ENCODE measurements at regions of chr12 and their contacts with region 1.

Region 1: GRCh38 chr12:12562585-12563261 is at the start of gene DUSP16:
- DNase-seq: peak; percentile 96
- H3K4me3 Mint-ChIP-seq: peak within 1 kb of the TSS; percentile 88
- H3K27ac Mint-ChIP-seq: peak within 1 kb of the TSS; percentile 96
- H3K4me1 Mint-ChIP-seq: peaks cover 29% of the 10 kb centered on the region
- H3K27me3 Mint-ChIP-seq: no peaks in the 10 kb centered on the region
- total RNA-seq, gene DUSP16: 48.3 and 51.2 TPM in 2 replicates

Region 2: DNA sequence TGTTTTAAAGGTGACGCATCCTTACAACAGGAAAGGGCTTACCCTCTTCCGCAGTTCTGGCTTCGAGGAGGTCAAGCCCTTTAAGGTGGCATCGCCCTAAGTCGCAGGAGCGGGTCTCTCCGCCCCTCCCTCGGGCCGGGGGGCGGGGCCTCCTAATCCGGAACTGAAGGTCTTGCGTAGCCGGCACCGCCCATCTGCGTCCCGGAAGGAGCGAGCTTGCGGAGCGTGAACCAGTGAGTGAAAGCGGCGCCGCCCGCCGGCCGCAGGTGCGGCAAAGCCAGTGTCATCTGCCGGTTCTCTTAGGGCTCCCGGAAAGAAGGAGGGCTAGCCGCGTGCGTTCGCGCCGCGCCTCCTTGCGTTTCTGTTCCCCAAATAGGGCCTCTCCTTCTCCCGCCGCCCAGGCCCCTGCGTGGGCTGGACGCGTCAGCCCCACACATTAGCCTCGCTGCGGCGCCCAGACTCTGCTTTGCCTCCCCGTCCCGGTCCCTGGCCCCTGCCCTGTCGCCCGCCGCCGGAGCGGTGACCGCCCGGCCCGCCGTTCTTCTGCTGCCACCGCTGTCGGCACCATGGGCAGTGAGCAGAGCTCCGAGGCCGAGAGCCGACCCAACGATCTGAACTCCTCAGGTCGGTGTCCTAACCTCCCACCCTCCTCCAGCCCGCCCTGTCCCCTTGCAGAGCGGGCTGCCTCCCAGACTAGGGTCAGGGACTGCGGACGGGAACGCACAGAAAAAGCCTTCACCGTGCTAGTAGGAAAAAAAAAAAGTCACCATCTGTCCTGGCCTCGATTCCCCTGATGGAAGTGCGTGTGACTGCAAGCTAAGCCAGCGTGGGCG is 205.6 kb before region 1 on chr12 and contains the start of gene BORCS5:
- intact Hi-C with region 1: loop called (anchors 1 kb)
- DNase-seq: peak; percentile 100
- H3K4me3 Mint-ChIP-seq: peak within 1 kb of the TSS; percentile 98
- H3K27ac Mint-ChIP-seq: peak within 1 kb of the TSS; percentile 99
- H3K4me1 Mint-ChIP-seq: peaks cover 46% of the 10 kb centered on the region
- H3K27me3 Mint-ChIP-seq: no peaks in the 10 kb centered on the region
- total RNA-seq, gene BORCS5: 34.0 and 37.0 TPM in 2 replicates

Region 3: DNA sequence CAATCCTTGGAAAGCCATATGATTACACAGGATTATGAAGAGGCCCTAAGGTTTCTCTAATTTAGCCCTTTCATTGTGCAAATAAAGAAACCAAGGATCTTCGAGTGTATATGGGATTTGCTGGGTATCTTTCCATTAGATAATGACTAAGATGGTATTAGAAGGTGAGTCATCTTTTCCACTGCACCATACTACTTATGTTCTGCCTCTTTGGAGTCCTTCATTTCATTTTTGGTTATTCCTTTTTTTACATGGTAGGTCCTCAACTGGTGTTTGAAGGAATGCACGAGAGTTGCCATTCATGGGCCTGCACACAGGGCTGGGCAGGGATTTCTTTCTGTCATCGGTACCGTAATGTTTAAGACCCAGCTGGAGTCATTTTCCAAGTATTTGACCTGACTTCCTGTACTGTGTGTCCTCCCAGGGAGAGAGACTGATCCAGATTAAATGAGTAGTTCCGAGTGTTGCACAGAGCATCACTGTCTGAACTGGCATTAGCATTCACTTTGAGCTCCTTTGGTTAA is 120.1 kb before region 1 on chr12:
- intact Hi-C with region 1: loop called (anchors 1 kb)
- DNase-seq: no peak
- H3K4me3 Mint-ChIP-seq: peak overlapping the region; percentile 21
- H3K27ac Mint-ChIP-seq: peak overlapping the region; percentile 91
- H3K4me1 Mint-ChIP-seq: peaks cover 64% of the 10 kb centered on the region
- H3K27me3 Mint-ChIP-seq: no peaks in the 10 kb centered on the region

Region 4: DNA sequence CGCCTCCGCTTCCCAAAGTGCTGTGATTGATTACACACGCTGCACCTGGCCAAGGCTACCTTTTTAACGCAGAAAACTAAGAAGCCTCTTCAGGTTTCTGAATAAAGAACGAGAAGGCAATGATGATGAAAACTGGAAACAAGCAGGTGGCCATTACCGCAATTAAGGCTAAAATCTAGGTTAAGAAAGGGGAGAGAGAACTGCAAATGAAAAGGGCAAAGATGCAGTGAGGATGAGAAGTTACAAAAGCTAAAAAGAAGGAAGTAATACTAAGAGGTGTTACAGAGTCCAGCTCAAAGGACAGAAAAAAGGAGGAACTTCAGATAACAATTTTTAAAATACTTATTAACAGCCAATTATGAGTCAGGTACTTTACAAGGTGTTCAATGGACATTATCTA is 79.8 kb before region 1 on chr12:
- intact Hi-C with region 1: loop called (anchors 2 kb)
- DNase-seq: no peak
- H3K4me3 Mint-ChIP-seq: peak overlapping the region; percentile 83
- H3K27ac Mint-ChIP-seq: peak overlapping the region; percentile 96
- H3K4me1 Mint-ChIP-seq: peaks cover 59% of the 10 kb centered on the region
- H3K27me3 Mint-ChIP-seq: no peaks in the 10 kb centered on the region

Region 5: GRCh38 chr12:12527820-12528296 is 34.9 kb before region 1 on chr12:
- intact Hi-C with region 1: loop called (anchors 5 kb)
- DNase-seq: peak; percentile 72
- H3K4me3 Mint-ChIP-seq: peak overlapping the region; percentile 52
- H3K27ac Mint-ChIP-seq: peak overlapping the region; percentile 75
- H3K4me1 Mint-ChIP-seq: peaks cover 38% of the 10 kb centered on the region
- H3K27me3 Mint-ChIP-seq: no peaks in the 10 kb centered on the region

Region 6: DNA sequence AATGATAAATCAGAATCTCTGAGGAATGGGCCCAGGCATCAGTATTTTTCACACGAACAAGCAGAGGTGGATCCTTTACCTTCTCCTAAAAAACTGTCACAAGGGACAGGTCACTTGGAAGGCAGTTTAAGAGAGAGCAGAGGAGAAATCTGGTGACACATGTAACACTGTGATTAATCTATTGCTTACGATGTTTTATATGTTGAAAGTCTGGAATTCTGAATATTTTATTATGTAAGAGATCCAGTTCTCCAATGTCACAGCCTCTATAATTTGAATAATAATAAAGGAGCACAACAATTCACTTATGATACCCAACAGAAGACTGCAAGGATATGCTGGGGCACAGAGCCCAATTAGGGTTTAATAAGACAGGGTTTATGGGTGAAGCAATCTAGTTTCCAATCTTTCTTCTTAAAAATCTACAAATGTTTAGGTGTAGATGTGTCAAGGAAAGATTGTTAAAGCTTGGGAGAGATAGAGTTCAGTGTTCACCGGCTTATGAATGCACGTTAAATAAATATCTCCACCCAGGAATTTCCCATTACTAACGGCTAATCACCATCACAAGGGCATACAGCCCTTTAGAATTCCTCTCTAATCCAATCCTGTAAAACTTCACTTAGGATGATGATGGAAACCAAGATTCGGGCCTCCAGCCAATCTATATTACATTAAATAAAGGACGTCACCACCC is 23.5 kb before region 1 on chr12:
- intact Hi-C with region 1: no loop called
- DNase-seq: peak; percentile 28
- H3K4me3 Mint-ChIP-seq: no peak overlapping the region
- H3K27ac Mint-ChIP-seq: no peak overlapping the region
- H3K4me1 Mint-ChIP-seq: peaks cover 33% of the 10 kb centered on the region
- H3K27me3 Mint-ChIP-seq: no peaks in the 10 kb centered on the region

Region 7: GRCh38 chr12:12611512-12612306 is 49.0 kb after region 1 on chr12 and contains the start of gene CREBL2:
- intact Hi-C with region 1: loop called (anchors 1 kb)
- DNase-seq: peak; percentile 95
- H3K4me3 Mint-ChIP-seq: peak within 1 kb of the TSS; percentile 99
- H3K27ac Mint-ChIP-seq: peak within 1 kb of the TSS; percentile 98
- H3K4me1 Mint-ChIP-seq: peaks cover 48% of the 10 kb centered on the region
- H3K27me3 Mint-ChIP-seq: no peaks in the 10 kb centered on the region
- total RNA-seq, gene CREBL2: 17.3 TPM in 2 replicates

Region 8: DNA sequence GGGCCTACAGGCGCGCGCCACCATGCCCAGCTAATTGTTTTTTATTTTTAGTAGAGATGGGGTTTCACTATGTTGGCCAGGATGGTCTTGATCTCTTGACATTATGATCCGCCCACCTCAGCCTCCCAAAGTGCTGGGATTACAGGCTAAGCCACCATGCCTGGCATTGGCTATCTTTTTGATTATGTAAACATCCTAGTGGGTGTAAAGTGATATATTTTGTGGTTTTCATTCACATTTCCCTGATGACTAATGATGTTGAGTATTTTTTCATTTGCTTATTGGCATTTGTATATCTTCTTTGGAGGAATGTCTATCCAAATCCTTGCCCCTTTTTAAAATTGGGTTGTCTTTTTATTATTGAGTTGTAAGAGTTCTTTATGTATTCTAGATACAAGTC is 65.3 kb after region 1 on chr12:
- intact Hi-C with region 1: no loop called
- DNase-seq: no peak
- H3K4me3 Mint-ChIP-seq: no peak overlapping the region
- H3K27ac Mint-ChIP-seq: no peak overlapping the region
- H3K4me1 Mint-ChIP-seq: peaks cover 32% of the 10 kb centered on the region
- H3K27me3 Mint-ChIP-seq: no peaks in the 10 kb centered on the region

Region 9: DNA sequence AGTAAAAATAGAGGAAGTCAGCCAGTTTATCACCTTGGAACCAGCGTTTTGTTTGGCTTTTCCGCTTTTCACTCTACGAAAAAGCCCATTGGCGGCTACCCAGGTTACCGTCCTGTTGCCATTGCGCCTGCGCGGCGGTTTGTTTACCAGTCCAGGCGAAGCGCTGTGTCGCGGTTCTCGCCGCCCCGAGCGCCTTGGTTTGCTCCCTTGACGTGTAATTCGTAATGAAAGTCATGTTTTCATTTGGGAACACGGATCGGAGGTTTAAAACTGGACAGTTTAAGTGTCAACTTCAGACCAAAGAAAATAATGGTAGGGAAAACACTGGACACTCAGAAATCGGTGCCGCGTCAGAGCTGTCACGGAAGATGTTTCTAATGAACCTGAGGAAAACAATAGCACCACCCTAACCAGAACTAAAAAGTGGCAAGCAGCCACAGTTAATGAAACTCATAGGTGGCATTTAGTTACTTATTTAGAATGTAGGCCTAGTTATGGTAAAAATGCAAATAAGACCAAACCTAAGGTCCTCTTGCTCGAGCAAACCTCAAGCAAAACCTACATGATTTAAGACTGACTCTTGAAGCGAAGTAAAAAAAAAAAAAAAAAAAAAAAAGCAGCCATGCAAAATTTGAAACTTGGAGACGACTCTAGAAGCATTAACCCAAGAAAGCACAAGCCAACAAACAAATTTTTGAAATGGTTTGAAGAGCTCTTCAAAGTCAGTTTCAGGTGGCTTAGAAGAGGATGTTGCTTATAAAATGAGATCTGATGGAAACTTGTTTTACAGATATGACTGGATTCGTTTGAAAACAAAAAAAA is 134.1 kb after region 1 on chr12:
- intact Hi-C with region 1: loop called (anchors 2 kb)
- DNase-seq: peak; percentile 98
- H3K4me3 Mint-ChIP-seq: peak overlapping the region; percentile 94
- H3K27ac Mint-ChIP-seq: peak overlapping the region; percentile 99
- H3K4me1 Mint-ChIP-seq: peaks cover 60% of the 10 kb centered on the region
- H3K27me3 Mint-ChIP-seq: no peaks in the 10 kb centered on the region